Naive thymus-derived CD4-positive, alpha-beta T cell (primary cell): ENCODE measurements at regions of chr4 and their contacts with region 1.

Region 1: GRCh38 chr4:42282081-42282901 is 115.0 kb upstream of the SHISA3 start:
- DNase-seq: peak in 5 of 9 donors; percentile 9 to 30 (median 12)
- ATAC-seq: peak; percentile 65
- H3K4me3 ChIP-seq: no peak overlapping the region
- H3K4me3 Mint-ChIP-seq: peak overlapping the region in 2 of 10 donors; percentile 18 to 39
- H3K27ac ChIP-seq: no peak overlapping the region
- H3K27ac Mint-ChIP-seq: no peak overlapping the region
- H3K4me1 ChIP-seq: no peaks in the 10 kb centered on the region
- H3K4me1 Mint-ChIP-seq: peaks cover 0 to 14% (median 7%) of the 10 kb centered on the region in 7 donors
- H3K27me3 ChIP-seq: no peaks in the 10 kb centered on the region
- H3K27me3 Mint-ChIP-seq: peaks cover 6 to 29% (median 22%) of the 10 kb centered on the region in 5 donors

Region 2: DNA sequence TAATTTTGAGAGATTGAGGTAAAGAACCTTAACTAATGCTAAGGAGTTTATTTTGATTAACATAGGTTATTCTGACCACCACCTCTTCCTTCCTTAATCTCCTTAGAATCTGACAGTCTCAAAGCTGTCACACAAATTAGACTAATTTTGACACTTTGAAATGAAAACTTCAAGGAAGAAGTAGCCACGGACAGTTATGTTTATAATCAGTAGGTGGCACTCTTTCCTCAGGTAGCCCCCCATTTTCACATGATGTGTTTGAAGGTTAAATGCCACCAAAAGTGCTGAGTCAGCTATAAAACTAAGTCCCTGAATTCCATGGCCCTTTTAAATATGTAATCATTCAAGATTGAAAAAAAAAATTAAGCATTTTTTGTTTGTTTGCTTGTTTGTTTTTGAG is 324.7 kb before region 1 on chr4:
- CTCF ChIA-PET with region 1: no interaction called
- POLR2A ChIA-PET with region 1: no interaction called
- intact Hi-C with region 1: loop called (anchors 5 kb)
- DNase-seq: peak in 1 of 9 donors; percentile 28
- ATAC-seq: no peak
- H3K4me3 ChIP-seq: no peak overlapping the region
- H3K4me3 Mint-ChIP-seq: no peak overlapping the region
- H3K27ac ChIP-seq: no peak overlapping the region
- H3K27ac Mint-ChIP-seq: no peak overlapping the region
- H3K4me1 ChIP-seq: no peaks in the 10 kb centered on the region
- H3K4me1 Mint-ChIP-seq: peaks cover 0 to 3% (median 0%) of the 10 kb centered on the region in 7 donors
- H3K27me3 ChIP-seq: no peaks in the 10 kb centered on the region
- H3K27me3 Mint-ChIP-seq: no peaks in the 10 kb centered on the region